A673 (cell line): ENCODE measurements at regions of chr5 and their contacts with region 1.

Region 1: DNA sequence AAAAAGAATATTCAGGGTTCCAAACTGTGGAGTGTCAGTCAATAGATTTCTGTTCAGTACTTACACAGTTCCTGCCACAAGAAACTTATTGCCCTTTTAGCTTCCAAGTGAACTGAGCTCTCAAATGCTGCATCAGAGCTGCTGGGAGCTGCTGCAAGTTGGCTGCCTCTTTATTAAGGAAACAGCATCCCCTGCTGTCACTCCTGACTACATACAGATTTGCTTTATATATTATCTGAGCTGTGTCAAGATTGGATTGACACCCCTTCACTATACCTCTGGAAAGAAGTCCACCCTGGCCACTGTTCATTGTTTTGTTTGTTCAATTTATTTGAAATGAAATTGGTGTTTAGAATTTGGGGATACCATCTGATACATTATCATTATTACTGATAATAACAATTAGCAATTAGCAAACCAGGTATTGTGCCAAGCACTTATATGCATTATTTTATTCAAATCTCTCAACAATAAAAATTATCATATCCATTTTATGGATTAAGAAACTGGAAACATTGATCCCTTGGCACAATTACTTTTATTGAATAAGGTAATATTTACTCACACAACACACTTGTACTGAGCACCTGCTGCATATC is 16.4 kb upstream of the C5orf58 start:
- DNase-seq: peak; percentile 82
- H3K4me3 ChIP-seq: no peak overlapping the region
- H3K27ac ChIP-seq: no peak overlapping the region
- H3K4me1 ChIP-seq: peaks cover 33% of the 10 kb centered on the region
- H3K27me3 ChIP-seq: no peaks in the 10 kb centered on the region
- CTCF ChIP-seq: peak; percentile 70

Region 2: DNA sequence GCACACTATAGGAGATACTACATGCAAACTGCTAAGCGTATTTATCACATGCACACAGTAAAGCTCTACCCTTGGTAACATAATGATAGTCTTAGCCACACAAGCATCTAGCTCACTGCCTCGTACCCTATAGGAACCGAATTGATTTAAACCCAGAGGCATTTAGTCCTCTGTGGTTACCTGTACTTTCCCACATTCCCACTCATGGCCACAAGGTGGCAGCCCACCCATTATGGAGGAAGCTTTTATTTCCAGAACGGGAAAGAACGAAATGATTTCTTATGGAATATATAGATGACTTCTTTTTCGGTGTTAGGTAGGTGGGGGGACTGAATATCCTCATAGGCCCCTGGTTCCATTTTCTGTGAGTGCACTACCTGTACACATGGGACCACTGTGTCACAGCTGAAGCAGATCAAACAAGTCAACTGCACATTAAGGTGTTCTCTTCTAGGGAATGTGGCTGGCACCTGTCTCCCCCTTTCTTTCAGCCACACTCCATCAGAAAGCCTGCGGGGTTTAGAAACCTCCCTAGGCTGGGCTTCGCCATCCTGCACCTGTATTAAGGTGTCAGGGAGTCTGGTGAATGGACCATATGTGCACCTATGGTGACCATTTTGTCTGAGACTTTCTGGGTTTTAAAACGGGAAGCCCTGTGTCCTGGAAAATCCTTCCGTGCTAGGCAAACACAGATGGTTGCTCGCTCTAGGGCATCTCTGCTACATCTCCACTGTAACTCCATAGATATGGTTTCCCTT is 1228.6 kb before region 1 on chr5:
- CTCF ChIA-PET with region 1: interaction called, 3 read pairs
- POLR2A ChIA-PET with region 1: no interaction called
- intact Hi-C with region 1: loop called (anchors 5 kb)
- DNase-seq: peak; percentile 61
- H3K4me3 ChIP-seq: no peak overlapping the region
- H3K27ac ChIP-seq: no peak overlapping the region
- H3K4me1 ChIP-seq: no peaks in the 10 kb centered on the region
- H3K27me3 ChIP-seq: peaks cover 47% of the 10 kb centered on the region
- CTCF ChIP-seq: peak; percentile 85

Region 3: DNA sequence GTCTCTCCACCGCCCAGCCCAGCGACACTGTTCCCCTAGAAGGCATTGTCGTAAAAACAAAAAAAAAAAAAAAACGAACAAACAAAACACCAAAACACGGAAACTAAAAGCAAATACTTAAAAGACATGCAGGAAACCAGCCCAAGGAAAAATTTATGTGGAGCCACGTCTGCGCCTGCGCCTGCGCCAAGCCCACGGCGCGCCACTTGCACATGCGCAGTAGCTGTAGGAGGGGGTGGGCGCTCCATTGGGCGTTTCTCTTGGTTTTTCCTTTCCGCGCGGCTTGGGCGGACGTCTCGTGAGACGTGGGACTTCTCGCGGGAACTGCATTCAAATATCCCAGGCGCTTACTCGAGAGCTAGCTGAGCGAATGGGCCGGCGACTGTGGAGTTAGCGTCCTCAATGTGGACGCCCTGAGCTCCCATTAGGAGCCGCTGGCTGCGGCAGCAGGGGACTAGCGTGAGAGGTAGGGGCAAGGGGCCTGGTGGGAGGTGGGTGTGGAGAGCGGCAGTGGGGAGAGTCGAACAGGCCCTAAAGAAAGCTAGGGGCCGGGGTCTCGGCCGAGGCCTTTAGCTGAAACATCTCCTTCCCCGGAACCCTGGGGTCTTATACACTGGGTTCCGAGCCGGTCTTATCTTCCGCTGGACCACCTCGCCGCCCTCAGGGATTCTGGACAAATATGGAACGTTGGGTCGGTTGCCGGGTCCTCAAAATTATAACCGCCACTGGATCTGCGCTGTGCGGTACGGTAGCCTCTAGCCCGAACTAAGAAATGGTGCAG is 632.8 kb before region 1 on chr5 and contains the start of gene SPDL1:
- CTCF ChIA-PET with region 1: no interaction called
- POLR2A ChIA-PET with region 1: no interaction called
- intact Hi-C with region 1: loop called (anchors 5 kb)
- DNase-seq: peak; percentile 95
- H3K4me3 ChIP-seq: peak within 1 kb of the TSS; percentile 88
- H3K27ac ChIP-seq: peak within 1 kb of the TSS; percentile 91
- H3K4me1 ChIP-seq: peaks cover 6% of the 10 kb centered on the region
- H3K27me3 ChIP-seq: peaks cover 9% of the 10 kb centered on the region
- CTCF ChIP-seq: no peak
- total RNA-seq, gene SPDL1: 50.2 and 57.6 TPM in 2 replicates

Region 4: DNA sequence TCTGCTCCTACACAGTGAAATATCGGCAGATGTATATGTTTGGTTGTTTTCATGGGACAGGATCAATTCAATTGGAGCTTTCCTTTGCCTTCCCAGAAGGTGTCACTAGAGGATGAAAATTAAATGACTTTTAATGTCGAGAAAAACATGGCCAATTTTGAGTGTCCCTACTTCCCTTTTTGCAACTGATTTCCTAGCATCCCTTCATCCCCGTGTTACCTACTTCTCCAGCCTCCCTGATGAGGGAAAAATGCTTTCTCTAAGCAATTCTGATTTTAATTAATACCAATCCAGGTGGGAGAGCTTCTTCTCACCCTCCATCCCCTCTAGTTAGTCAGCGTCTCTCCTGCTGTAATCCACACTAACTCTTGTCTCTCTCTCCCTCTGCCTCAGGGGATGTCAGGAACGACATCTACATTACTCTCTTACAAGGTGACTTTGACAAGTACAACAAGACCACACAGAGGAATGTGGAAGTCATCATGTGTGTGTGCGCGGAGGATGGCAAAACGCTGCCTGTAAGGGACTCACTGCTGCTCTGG is 514.4 kb before region 1 on chr5:
- CTCF ChIA-PET with region 1: interaction called, 4 read pairs
- POLR2A ChIA-PET with region 1: no interaction called
- intact Hi-C with region 1: loop called (anchors 2 kb)
- DNase-seq: peak; percentile 66
- H3K4me3 ChIP-seq: no peak overlapping the region
- H3K27ac ChIP-seq: no peak overlapping the region
- H3K4me1 ChIP-seq: peaks cover 25% of the 10 kb centered on the region
- H3K27me3 ChIP-seq: no peaks in the 10 kb centered on the region
- CTCF ChIP-seq: peak; percentile 63

Region 5: DNA sequence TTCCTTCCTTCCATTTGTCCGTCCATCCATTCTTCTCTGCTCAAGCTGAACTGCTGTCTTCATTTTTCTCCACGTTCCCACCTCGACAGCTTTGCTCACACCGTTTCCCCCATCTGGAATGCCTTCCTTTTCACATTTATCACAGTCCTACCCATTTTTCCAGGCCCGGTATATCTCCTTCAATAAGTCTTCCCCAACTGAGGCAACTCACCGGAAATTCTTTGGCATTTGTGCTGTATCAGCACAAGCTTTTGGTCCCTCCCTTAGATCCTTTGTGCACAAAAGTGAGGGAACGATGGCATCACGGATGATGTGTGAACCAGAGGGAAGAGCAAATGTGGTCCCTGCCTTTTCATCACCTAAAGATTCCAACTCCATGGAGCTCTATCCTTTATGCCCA is 190.5 kb before region 1 on chr5:
- CTCF ChIA-PET with region 1: interaction called, 3 read pairs
- POLR2A ChIA-PET with region 1: no interaction called
- intact Hi-C with region 1: loop called (anchors 2 kb)
- DNase-seq: peak; percentile 93
- H3K4me3 ChIP-seq: no peak overlapping the region
- H3K27ac ChIP-seq: peak overlapping the region; percentile 90
- H3K4me1 ChIP-seq: peaks cover 21% of the 10 kb centered on the region
- H3K27me3 ChIP-seq: no peaks in the 10 kb centered on the region
- CTCF ChIP-seq: no peak

Region 6: GRCh38 chr5:170100066-170100943 is 116.1 kb before region 1 on chr5:
- CTCF ChIA-PET with region 1: interaction called, 21 read pairs
- POLR2A ChIA-PET with region 1: no interaction called
- intact Hi-C with region 1: loop called (anchors 1 kb)
- DNase-seq: peak; percentile 86
- H3K4me3 ChIP-seq: no peak overlapping the region
- H3K27ac ChIP-seq: no peak overlapping the region
- H3K4me1 ChIP-seq: no peaks in the 10 kb centered on the region
- H3K27me3 ChIP-seq: no peaks in the 10 kb centered on the region
- CTCF ChIP-seq: peak; percentile 71

Region 7: DNA sequence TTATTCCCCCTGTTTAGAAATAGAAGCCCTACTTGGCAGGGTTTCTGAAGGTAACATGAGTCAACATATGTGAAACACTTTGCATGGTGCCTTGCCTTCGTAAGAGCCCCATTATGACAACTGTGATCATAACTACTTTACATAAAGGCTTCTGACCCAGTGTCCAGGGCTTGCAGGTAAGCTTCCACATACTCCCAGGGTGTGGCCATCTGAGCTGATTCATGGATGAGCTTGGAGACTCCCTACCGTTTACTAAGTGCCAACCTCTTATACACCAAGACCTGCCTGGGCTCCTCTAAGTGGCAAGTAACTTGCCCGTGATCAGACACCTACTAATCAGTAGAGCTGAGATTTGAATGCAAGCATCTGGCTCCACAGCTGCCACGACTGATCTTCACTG is 46.4 kb before region 1 on chr5:
- CTCF ChIA-PET with region 1: no interaction called
- POLR2A ChIA-PET with region 1: no interaction called
- intact Hi-C with region 1: no loop called
- DNase-seq: no peak
- H3K4me3 ChIP-seq: no peak overlapping the region
- H3K27ac ChIP-seq: no peak overlapping the region
- H3K4me1 ChIP-seq: no peaks in the 10 kb centered on the region
- H3K27me3 ChIP-seq: no peaks in the 10 kb centered on the region
- CTCF ChIP-seq: no peak

Region 8: GRCh38 chr5:170388818-170389549 is 172.6 kb after region 1 on chr5 and contains the start of gene KCNMB1:
- CTCF ChIA-PET with region 1: interaction called, 16 read pairs
- POLR2A ChIA-PET with region 1: no interaction called
- intact Hi-C with region 1: no loop called
- DNase-seq: no peak
- H3K4me3 ChIP-seq: no peak within 1 kb of the TSS
- H3K27ac ChIP-seq: no peak within 1 kb of the TSS
- H3K4me1 ChIP-seq: peaks cover 13% of the 10 kb centered on the region
- H3K27me3 ChIP-seq: no peaks in the 10 kb centered on the region
- CTCF ChIP-seq: no peak
- total RNA-seq, gene KCNMB1: not detected in 2 replicates